ENCODE measurements at regions of chr22 and their contacts with region 1.

Region 1: DNA sequence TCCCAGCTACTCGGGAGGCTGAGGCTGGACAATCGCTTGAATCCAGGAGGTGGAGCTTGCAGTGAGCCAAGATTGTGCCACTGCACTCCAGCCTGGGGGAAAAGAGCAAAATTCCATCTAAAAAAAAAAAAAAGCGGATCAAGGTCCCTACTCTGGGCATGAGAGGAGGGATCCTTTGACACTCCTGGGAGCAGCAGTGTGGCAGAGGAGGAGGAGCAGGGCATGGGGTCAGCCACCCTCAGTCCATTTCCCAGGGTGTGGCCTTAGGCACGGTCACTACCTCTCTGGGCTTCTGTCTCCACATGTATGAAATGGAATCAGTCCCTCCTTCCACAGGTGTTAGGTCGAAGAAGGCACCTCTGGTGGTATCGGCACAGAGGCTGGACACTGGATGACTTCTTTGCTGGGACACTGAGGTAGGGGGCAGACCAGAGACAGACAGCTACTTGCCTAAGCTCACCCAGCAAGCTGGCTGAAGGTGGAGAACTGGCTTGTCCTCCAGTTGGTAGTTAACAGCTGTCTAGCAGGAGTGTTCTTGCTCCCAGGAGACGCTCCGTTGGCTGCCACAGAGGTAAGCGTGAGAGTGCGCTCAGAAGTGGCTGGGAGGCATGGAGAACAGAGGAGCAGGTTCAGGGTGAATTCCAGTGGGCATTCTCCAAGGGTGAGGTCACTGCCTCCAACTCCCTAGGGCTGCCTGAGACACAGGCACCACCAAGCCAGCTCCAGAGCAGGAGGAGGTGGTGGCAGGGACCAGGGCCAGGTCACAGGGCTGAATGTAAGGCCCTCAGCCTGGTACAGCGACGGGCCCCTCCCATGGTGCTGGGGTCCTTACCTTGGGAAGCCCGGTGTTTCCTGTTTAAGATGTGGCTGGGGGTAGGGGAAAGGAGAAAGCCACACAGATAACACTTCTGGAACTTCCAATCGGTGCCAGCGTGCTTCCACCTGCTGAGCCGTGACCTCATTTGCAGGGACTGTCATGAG is 19.5 kb downstream of the TXN2 start:
- DNase-seq: no peak
- H3K4me3 ChIP-seq: no peak overlapping the region
- H3K27ac ChIP-seq: no peak overlapping the region
- H3K4me1 ChIP-seq: peaks cover 10% of the 10 kb centered on the region
- H3K27me3 ChIP-seq: no peaks in the 10 kb centered on the region
- CTCF ChIP-seq: no peak
- EP300 ChIP-seq: no peak
- POLR2A ChIP-seq: no peak

Region 2: DNA sequence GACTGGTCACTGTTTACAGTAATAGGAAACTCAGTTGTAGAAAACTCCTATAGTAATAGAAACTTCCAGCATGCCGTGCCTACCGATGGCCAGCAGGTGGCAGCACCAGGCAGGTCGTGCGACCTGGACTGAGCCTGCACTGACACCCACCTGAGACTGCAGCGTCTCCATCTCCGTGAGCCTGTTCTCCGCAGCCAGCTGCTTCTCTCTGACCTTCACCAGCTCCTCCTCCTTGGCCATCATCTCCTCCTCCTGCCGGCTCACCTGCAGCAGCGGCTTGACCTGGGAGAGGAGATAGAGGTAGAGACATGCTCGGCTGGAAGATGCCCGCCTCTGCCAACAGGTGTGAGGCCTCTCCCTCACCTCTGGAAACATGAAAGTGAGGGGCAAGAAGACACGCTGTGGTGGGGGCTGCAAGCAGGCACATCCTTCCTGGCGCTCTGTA is 160.6 kb before region 1 on chr22:
- intact Hi-C with region 1: loop called in 2 of 4 experiments (anchors 5 kb)
- DNase-seq: peak; percentile 67 to 88 (median 83)
- H3K4me3 ChIP-seq: no peak overlapping the region
- H3K27ac ChIP-seq: no peak overlapping the region
- H3K4me1 ChIP-seq: no peaks in the 10 kb centered on the region
- H3K27me3 ChIP-seq: no peaks in the 10 kb centered on the region
- CTCF ChIP-seq: peak; percentile 92 to 95 (median 94)
- EP300 ChIP-seq: no peak
- POLR2A ChIP-seq: no peak

Region 3: DNA sequence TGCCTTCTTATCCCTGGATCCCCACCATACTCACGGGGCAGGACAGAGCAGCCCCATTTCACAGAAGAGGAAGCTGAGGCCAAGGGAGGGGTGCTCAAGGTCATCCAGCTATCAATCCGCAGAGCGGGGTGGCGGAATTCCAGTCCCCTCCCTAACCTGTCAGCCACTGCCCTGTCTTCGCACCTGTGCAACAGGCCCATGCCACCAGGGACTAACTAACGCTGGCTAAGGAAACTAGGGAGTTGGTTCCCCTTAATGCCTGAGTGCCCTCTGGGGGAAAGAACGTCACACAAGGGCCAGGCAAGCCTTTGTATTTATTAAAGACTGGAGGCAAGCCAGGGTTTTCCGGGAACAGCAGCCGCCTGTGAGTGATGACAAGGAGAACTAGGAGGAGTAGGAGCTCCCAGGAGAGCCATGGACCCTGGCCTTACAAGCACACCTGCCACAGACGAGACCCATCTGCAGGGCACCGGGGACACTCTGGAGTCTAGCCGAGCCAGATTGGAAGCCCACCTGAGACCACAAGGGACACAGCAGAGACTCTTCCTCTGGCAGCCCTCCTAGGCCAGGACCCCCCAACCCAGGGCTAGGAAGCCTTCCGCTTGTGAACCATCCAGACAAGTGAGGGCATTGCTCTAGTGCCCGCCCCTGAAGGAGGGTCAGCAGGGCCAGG is 138.6 kb before region 1 on chr22:
- intact Hi-C with region 1: loop called in 2 of 4 experiments (anchors 5 kb)
- DNase-seq: peak in 2 of 5 donors; percentile 52 to 71
- H3K4me3 ChIP-seq: no peak overlapping the region
- H3K27ac ChIP-seq: peak overlapping the region; percentile 65 to 76
- H3K4me1 ChIP-seq: peaks cover 14% of the 10 kb centered on the region
- H3K27me3 ChIP-seq: no peaks in the 10 kb centered on the region
- CTCF ChIP-seq: peak in 1 of 3 donors; percentile 20
- EP300 ChIP-seq: no peak
- POLR2A ChIP-seq: no peak

Region 4: GRCh38 chr22:36352803-36353507 is 109.0 kb before region 1 on chr22:
- intact Hi-C with region 1: loop called in 2 of 4 experiments (anchors 10 kb)
- DNase-seq: peak; percentile 65 to 87 (median 83)
- H3K4me3 ChIP-seq: no peak overlapping the region
- H3K27ac ChIP-seq: peak overlapping the region; percentile 43 to 76
- H3K4me1 ChIP-seq: peaks cover 44% of the 10 kb centered on the region
- H3K27me3 ChIP-seq: no peaks in the 10 kb centered on the region
- CTCF ChIP-seq: no peak
- EP300 ChIP-seq: no peak
- POLR2A ChIP-seq: no peak

Region 5: GRCh38 chr22:36369922-36370791 is 91.8 kb before region 1 on chr22:
- intact Hi-C with region 1: loop called in 1 of 4 experiments (anchors 10 kb)
- DNase-seq: peak in 2 of 5 donors; percentile 49 to 60
- H3K4me3 ChIP-seq: peak overlapping the region; percentile 6
- H3K27ac ChIP-seq: peak overlapping the region; percentile 62 to 68
- H3K4me1 ChIP-seq: peaks cover 56% of the 10 kb centered on the region
- H3K27me3 ChIP-seq: no peaks in the 10 kb centered on the region
- CTCF ChIP-seq: no peak
- EP300 ChIP-seq: no peak
- POLR2A ChIP-seq: no peak

Region 6: DNA sequence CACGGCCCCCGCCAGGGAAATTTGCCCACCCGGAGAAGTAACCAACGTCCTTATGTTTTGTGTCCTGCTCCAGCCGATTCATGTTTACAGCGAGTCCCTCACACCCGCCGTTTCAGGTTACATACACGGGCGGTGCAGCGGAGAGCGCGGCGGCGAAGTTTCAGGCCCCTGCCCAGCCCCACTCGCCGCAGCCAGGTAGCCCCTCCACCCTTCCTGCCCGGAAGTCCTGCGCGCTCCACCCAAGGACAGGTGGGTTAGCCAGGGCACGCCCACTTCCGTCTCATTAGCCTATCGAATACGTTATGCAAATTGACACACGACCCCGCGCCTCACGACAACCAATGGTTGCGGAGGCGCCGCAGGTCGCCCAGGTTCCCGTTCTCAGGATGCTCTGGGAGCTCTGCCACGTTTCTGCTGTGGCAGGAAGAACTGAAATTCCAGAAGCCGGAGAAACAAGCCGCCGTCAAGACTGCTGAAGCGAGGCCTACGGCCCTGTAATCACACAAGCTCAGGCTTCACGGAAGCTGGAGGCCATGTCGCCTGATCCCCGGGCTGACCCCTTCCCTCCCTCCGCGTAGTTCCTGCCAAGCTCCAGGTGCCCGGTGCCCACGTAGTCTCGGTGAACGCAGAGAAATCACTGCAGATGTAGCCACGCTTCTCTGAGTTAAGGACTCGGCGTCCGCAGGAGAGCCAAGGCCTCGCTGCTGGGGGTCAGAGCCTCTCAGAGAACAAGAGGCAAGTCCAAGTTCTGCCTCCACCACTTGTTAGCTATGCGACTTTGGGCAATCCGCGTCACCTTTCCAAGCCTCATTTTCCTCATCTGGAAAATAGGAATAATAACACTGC is 51.8 kb before region 1 on chr22:
- intact Hi-C with region 1: no loop called
- DNase-seq: peak; percentile 86 to 95 (median 91)
- H3K4me3 ChIP-seq: peak overlapping the region; percentile 15
- H3K27ac ChIP-seq: peak overlapping the region in 1 of 2 donors; percentile 90
- H3K4me1 ChIP-seq: no peaks in the 10 kb centered on the region
- H3K27me3 ChIP-seq: no peaks in the 10 kb centered on the region
- CTCF ChIP-seq: peak in 1 of 3 donors; percentile 42
- EP300 ChIP-seq: no peak
- POLR2A ChIP-seq: peak; percentile 29

Measured in ovary (tissue), 10 donors.